A673 (cell line): ENCODE measurements at regions of chr12 and their contacts with region 1.

Region 1: GRCh38 chr12:119649202-119649808 is 18.6 kb upstream of the PRKAB1 start:
- DNase-seq: peak; percentile 66
- H3K4me3 ChIP-seq: no peak overlapping the region
- H3K27ac ChIP-seq: no peak overlapping the region
- H3K4me1 ChIP-seq: no peaks in the 10 kb centered on the region
- H3K27me3 ChIP-seq: no peaks in the 10 kb centered on the region
- CTCF ChIP-seq: peak; percentile 88

Region 2: DNA sequence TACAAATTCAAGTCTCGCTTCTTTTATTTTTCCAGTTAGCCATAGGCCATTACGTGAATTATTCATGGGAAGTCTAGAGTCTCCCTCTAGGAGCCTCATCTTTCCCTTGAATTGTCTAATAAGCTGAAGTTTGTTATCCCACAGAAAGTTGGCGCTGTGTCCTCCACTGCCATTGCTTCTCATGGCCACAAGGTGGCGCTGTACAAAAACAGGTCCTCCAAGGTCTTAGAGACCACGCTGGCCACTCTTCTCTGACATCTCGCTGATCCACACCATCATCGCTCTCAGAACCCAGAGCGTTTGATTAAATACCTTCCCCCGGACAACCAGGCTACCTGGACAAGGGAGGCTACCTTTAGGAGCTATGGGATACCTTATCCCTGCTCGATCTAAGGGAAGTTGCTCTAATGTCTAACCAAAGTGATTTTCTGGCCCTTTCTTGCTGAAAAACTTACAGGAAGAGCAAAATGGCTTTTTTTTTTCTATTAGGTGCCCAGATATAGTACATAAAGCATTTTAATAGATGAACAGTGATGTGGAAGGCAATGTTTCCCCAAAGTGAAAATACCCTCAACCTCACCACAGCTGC is 204.8 kb before region 1 on chr12:
- CTCF ChIA-PET with region 1: interaction called, 5 read pairs
- POLR2A ChIA-PET with region 1: no interaction called
- intact Hi-C with region 1: loop called (anchors 1 kb)
- DNase-seq: peak; percentile 88
- H3K4me3 ChIP-seq: no peak overlapping the region
- H3K27ac ChIP-seq: no peak overlapping the region
- H3K4me1 ChIP-seq: no peaks in the 10 kb centered on the region
- H3K27me3 ChIP-seq: no peaks in the 10 kb centered on the region
- CTCF ChIP-seq: peak; percentile 99

Region 3: GRCh38 chr12:119725523-119725922 is 76.2 kb after region 1 on chr12:
- CTCF ChIA-PET with region 1: no interaction called
- POLR2A ChIA-PET with region 1: no interaction called
- intact Hi-C with region 1: no loop called
- DNase-seq: no peak
- H3K4me3 ChIP-seq: no peak overlapping the region
- H3K27ac ChIP-seq: no peak overlapping the region
- H3K4me1 ChIP-seq: no peaks in the 10 kb centered on the region
- H3K27me3 ChIP-seq: no peaks in the 10 kb centered on the region
- CTCF ChIP-seq: no peak